B cell (primary cell): ENCODE measurements at regions of chr19 and their contacts with region 1.

Region 1: GRCh38 chr19:14419106-14419813 is at the start of gene DDX39A:
- DNase-seq: peak; percentile 99
- ATAC-seq: peak; percentile 91
- H3K4me3 ChIP-seq: peak within 1 kb of the TSS; percentile 30 to 89 (median 82)
- H3K4me3 Mint-ChIP-seq: peak within 1 kb of the TSS; percentile 89
- H3K27ac ChIP-seq: peak within 1 kb of the TSS; percentile 92 to 98
- H3K27ac Mint-ChIP-seq: peak within 1 kb of the TSS; percentile 96
- H3K4me1 ChIP-seq: peaks cover 36 to 50% of the 10 kb centered on the region in 2 donors
- H3K4me1 Mint-ChIP-seq: peaks cover 37% of the 10 kb centered on the region
- H3K27me3 ChIP-seq: no peaks in the 10 kb centered on the region
- H3K27me3 Mint-ChIP-seq: no peaks in the 10 kb centered on the region
- CTCF ChIP-seq: no peak
- total RNA-seq, gene DDX39A: 168 and 178 TPM in 2 replicates

Region 2: DNA sequence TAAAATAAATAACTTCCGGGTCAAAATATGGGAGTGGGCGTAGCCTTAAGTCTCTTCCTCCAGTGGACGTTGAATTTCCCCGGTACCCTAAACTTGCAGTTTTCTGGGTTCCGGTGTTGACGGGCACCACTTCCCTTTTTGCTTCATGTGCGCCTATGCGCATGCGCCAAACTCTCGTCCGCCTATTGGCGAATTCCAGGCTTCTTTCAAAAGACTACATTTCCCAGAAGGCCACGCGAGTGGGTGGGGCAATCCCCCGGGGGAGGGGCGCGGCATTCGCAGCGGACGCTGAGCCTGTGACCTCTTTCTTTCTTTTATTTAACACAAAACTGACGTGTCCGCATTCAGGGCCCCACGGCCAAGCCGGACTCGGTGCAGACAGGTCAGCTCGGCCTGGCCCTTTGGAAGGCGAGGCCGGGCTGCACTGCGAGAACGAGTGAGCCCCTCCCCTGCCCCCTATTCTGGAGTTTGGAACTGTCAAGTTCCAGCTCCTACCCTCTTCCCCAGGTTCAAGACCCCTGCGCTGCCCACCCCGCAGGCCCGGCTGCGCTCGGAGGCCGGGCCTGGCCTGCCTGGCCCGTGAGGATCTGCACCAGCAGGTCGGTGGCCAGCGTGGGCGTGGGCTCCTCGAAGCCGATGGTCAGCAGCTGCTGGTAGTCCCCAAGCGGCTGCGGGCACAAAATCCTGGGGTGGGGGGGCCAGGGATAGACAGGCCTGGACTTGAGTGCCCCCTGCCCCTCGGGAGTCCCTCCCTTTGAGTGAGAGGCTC is 337.8 kb before region 1 on chr19:
- CTCF ChIA-PET with region 1: no interaction called
- POLR2A ChIA-PET with region 1: interaction called, 5 read pairs
- intact Hi-C with region 1: loop called (anchors 5 kb)
- DNase-seq: peak; percentile 99
- ATAC-seq: peak; percentile 91
- H3K4me3 ChIP-seq: peak overlapping the region; percentile 65 to 89 (median 77)
- H3K4me3 Mint-ChIP-seq: peak overlapping the region; percentile 96
- H3K27ac ChIP-seq: peak overlapping the region; percentile 72 to 89
- H3K27ac Mint-ChIP-seq: peak overlapping the region; percentile 96
- H3K4me1 ChIP-seq: peaks cover 14 to 18% of the 10 kb centered on the region in 2 donors
- H3K4me1 Mint-ChIP-seq: peaks cover 12% of the 10 kb centered on the region
- H3K27me3 ChIP-seq: no peaks in the 10 kb centered on the region
- H3K27me3 Mint-ChIP-seq: no peaks in the 10 kb centered on the region
- CTCF ChIP-seq: peak; percentile 10

Region 3: DNA sequence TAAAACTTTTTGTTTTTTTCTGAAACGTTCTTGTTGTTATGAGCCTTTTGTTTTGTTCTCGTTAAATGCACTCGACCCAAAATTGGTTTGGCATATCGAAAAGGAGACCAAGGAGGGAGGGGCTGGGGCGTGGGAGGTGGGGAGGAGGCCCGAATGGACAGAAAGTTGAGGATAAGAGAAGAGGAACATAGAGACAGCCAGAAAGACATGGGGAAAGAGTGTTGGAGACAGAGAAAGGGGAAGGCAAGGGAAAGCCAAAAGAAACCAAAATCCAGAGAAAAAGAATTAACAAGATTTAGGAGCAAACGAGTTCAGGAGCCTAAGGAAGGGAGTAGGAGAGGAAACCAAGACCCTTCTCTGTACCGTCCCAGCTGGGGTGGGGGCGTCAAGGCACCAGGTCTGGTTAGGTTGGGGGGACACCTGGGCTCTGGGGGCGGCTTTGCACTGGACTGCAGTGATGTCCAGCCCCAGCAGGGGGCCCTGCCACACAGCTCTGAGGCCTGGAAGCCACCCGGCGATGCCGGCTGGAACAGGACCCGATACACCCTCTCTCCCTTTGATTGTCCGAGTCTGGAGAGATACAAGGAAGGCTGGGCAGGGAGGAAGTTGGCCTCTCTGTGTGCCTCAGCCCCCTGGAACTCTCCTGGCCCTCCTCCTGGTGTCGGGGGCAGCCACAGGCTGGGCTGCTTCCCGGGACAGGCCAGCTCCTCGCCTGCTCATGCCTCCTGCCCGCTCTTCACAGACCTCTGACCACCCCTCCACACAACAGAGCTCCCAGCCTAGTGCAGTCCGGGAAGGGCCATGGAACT is 271.3 kb before region 1 on chr19:
- CTCF ChIA-PET with region 1: no interaction called
- POLR2A ChIA-PET with region 1: no interaction called
- intact Hi-C with region 1: no loop called
- DNase-seq: peak; percentile 56
- ATAC-seq: peak; percentile 62
- H3K4me3 ChIP-seq: no peak overlapping the region
- H3K4me3 Mint-ChIP-seq: peak overlapping the region; percentile 44
- H3K27ac ChIP-seq: no peak overlapping the region
- H3K27ac Mint-ChIP-seq: peak overlapping the region; percentile 67
- H3K4me1 ChIP-seq: peaks cover 19 to 27% of the 10 kb centered on the region in 2 donors
- H3K4me1 Mint-ChIP-seq: peaks cover 17% of the 10 kb centered on the region
- H3K27me3 ChIP-seq: no peaks in the 10 kb centered on the region
- H3K27me3 Mint-ChIP-seq: no peaks in the 10 kb centered on the region
- CTCF ChIP-seq: peak; percentile 71

Region 4: GRCh38 chr19:14383661-14384555 is 35.4 kb before region 1 on chr19:
- CTCF ChIA-PET with region 1: interaction called, 3 read pairs
- POLR2A ChIA-PET with region 1: interaction called, 8 read pairs
- intact Hi-C with region 1: loop called (anchors 1 kb)
- DNase-seq: peak; percentile 68
- ATAC-seq: peak; percentile 12
- H3K4me3 ChIP-seq: peak overlapping the region; percentile 19 to 90 (median 39)
- H3K4me3 Mint-ChIP-seq: peak overlapping the region; percentile 85
- H3K27ac ChIP-seq: peak overlapping the region; percentile 97 to 99
- H3K27ac Mint-ChIP-seq: peak overlapping the region; percentile 89
- H3K4me1 ChIP-seq: peaks cover 48 to 70% of the 10 kb centered on the region in 2 donors
- H3K4me1 Mint-ChIP-seq: peaks cover 51% of the 10 kb centered on the region
- H3K27me3 ChIP-seq: no peaks in the 10 kb centered on the region
- H3K27me3 Mint-ChIP-seq: no peaks in the 10 kb centered on the region
- CTCF ChIP-seq: no peak

Region 5: DNA sequence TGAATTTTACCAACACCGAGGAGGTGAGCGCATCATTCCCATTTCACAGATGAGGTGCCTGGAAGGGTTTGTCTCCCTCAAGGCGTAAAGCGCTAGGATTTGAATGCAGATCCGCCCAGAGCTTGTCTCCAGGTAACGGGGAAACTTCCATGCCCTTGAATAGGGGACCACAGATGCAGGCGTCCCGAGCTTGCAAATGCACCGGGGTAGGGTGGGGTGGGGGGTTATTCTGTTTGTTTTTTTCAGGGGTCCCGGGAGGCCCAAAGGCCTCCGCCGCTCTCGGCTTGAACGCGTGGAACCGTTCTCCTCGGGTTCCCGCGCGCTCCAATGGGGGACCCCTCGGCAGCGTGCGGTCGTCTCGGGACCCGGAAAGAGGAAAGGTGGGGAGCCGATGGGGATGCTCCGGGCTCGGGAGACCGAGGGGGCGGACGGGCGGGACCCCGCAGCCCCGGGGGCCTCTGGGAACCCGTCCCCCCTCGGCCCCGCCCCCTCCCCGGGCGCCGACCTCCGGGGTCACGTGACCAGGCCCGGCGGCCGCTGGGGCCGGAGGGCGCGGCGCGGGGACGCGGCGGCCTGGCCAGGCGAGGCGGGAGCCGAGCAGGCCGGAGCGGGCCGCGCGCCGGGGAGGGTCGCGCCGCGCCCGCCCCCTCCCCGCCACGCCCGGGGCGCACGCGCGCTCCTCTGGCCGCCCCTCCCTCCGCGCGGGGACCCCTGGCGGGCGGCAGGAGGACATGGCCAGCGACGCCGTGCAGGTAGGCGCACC is 13.7 kb after region 1 on chr19 and contains the start of gene PKN1:
- CTCF ChIA-PET with region 1: interaction called, 6 read pairs
- POLR2A ChIA-PET with region 1: interaction called, 16 read pairs
- intact Hi-C with region 1: loop called (anchors 1 kb)
- DNase-seq: peak; percentile 73
- ATAC-seq: peak; percentile 66
- H3K4me3 ChIP-seq: peak within 1 kb of the TSS; percentile 14 to 81 (median 77)
- H3K4me3 Mint-ChIP-seq: peak within 1 kb of the TSS; percentile 89
- H3K27ac ChIP-seq: peak within 1 kb of the TSS; percentile 76 to 86
- H3K27ac Mint-ChIP-seq: peak within 1 kb of the TSS; percentile 90
- H3K4me1 ChIP-seq: peaks cover 20 to 28% of the 10 kb centered on the region in 2 donors
- H3K4me1 Mint-ChIP-seq: peaks cover 31% of the 10 kb centered on the region
- H3K27me3 ChIP-seq: peaks cover 0 to 3% (median 0%) of the 10 kb centered on the region in 4 experiments
- H3K27me3 Mint-ChIP-seq: no peaks in the 10 kb centered on the region
- CTCF ChIP-seq: no peak
- total RNA-seq, gene PKN1: 170 and 171 TPM in 2 replicates

Region 6: DNA sequence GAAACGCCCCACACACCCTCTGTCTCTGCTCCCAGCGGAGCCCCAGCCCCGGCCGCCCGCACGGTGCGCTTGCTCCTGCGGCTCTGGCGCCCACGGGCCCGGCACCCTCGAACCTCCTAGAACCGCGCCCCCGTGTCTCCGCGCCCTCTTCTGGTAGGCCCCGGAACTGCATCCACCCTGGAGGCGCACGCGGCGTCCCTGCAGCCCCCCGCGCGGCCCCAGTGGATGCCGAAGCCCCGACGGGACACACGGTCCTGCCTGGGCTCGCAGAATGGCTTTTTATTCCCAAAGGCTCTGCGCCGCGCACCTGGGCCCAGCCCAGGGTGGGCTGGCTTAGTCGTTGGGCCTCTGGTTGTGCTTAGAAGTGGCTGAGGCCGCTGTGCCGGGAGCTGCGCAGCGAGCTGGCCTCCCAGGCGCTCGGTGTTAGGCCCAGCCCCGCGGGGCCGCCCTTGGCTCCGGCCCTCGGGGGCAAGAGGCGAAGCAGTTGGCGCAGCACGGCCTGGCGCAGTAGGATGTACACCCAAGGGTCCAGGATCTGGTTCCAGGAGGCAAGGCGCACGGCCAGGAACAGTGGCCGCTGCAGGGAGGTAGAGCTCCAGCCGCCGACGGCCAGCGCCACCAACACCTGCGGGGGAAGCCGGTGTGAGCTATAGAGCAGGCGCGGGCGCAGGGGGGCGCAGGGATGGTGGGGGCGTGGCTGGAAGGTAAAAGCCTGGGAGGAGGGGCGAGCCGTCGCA is 53.1 kb after region 1 on chr19:
- CTCF ChIA-PET with region 1: interaction called, 3 read pairs
- POLR2A ChIA-PET with region 1: no interaction called
- intact Hi-C with region 1: loop called (anchors 2 kb)
- DNase-seq: peak; percentile 87
- ATAC-seq: peak; percentile 83
- H3K4me3 ChIP-seq: peak overlapping the region in 3 of 5 experiments; percentile 24 to 46 (median 38)
- H3K4me3 Mint-ChIP-seq: peak overlapping the region; percentile 61
- H3K27ac ChIP-seq: no peak overlapping the region
- H3K27ac Mint-ChIP-seq: no peak overlapping the region
- H3K4me1 ChIP-seq: peaks cover 21 to 27% of the 10 kb centered on the region in 2 donors
- H3K4me1 Mint-ChIP-seq: peaks cover 27% of the 10 kb centered on the region
- H3K27me3 ChIP-seq: peaks cover 0 to 28% (median 14%) of the 10 kb centered on the region in 4 experiments
- H3K27me3 Mint-ChIP-seq: peaks cover 28% of the 10 kb centered on the region
- CTCF ChIP-seq: peak; percentile 99

Region 7: DNA sequence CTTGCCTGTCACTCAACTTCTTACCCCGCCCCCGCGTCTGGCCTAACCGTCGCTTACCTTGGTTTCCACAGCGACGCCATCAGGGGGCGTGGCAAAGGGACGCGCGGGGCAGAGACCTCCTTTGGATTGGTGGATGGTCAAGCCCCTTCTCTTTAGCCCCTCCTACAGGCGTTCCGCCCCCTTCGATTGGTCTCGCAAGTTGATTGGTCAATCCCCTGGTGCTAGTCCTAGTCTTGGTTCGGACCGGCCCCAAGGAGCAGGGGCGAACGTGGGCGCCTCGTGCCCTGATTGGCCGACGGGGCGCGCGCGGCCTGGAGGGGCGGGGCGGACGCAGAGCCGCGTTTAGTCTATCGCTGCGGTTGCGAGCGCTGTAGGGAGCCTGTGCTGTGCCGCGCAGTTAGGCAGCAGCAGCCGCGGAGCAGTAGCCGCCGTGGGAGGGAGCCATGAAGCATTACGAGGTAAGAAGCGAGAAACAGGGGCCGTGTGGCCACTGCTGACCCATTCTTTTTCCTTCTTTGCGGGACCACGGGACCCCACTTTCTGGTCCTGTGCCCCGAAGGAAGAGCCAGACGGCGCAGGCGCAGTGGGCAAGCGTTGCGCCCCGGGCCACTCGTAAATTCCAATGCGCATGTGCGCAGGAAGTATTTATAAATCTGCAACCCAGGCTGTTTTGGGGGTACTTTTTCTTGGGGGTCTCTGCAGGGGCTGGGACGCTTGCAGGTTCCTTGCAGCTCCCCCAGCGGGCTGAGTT is 110.2 kb after region 1 on chr19 and contains the start of gene TECR:
- CTCF ChIA-PET with region 1: no interaction called
- POLR2A ChIA-PET with region 1: no interaction called
- intact Hi-C with region 1: loop called (anchors 1 kb)
- DNase-seq: peak; percentile 100
- ATAC-seq: peak; percentile 97
- H3K4me3 ChIP-seq: peak within 1 kb of the TSS; percentile 64 to 95 (median 72)
- H3K4me3 Mint-ChIP-seq: peak within 1 kb of the TSS; percentile 91
- H3K27ac ChIP-seq: peak within 1 kb of the TSS; percentile 56 to 86
- H3K27ac Mint-ChIP-seq: peak within 1 kb of the TSS; percentile 95
- H3K4me1 ChIP-seq: peaks cover 13 to 22% of the 10 kb centered on the region in 2 donors
- H3K4me1 Mint-ChIP-seq: peaks cover 29% of the 10 kb centered on the region
- H3K27me3 ChIP-seq: no peaks in the 10 kb centered on the region
- H3K27me3 Mint-ChIP-seq: no peaks in the 10 kb centered on the region
- CTCF ChIP-seq: no peak
- total RNA-seq, gene TECR: 68.9 and 72.4 TPM in 2 replicates

Region 8: GRCh38 chr19:14603990-14604387 is 184.7 kb after region 1 on chr19:
- CTCF ChIA-PET with region 1: no interaction called
- POLR2A ChIA-PET with region 1: no interaction called
- intact Hi-C with region 1: no loop called
- DNase-seq: peak; percentile 89
- ATAC-seq: peak; percentile 90
- H3K4me3 ChIP-seq: peak overlapping the region in 2 of 5 experiments; percentile 22 to 26
- H3K4me3 Mint-ChIP-seq: peak overlapping the region; percentile 67
- H3K27ac ChIP-seq: peak overlapping the region; percentile 85 to 94
- H3K27ac Mint-ChIP-seq: peak overlapping the region; percentile 83
- H3K4me1 ChIP-seq: peaks cover 54% of the 10 kb centered on the region in 2 donors
- H3K4me1 Mint-ChIP-seq: peaks cover 63% of the 10 kb centered on the region
- H3K27me3 ChIP-seq: no peaks in the 10 kb centered on the region
- H3K27me3 Mint-ChIP-seq: no peaks in the 10 kb centered on the region
- CTCF ChIP-seq: no peak